Gastrocnemius medialis (tissue), 4 donors: ENCODE measurements at regions of chr17 and their contacts with region 1.

Region 1: GRCh38 chr17:65556014-65556909 is 5.2 kb downstream of the AXIN2 start:
- DNase-seq: peak; percentile 62 to 81
- ATAC-seq: peak; percentile 29 to 46
- H3K4me3 ChIP-seq: peak overlapping the region in 1 of 4 donors; percentile 32
- H3K27ac ChIP-seq: no peak overlapping the region
- H3K4me1 ChIP-seq: peaks cover 14 to 31% of the 10 kb centered on the region in 2 donors
- H3K27me3 ChIP-seq: no peaks in the 10 kb centered on the region
- CTCF ChIP-seq: peak; percentile 73 to 95 (median 90)
- POLR2A ChIP-seq: peak; percentile 41 to 76

Region 2: GRCh38 chr17:65055348-65056261 is 500.7 kb before region 1 on chr17:
- in situ Hi-C with region 1: no loop called
- intact Hi-C with region 1: loop called (anchors 10 kb)
- DNase-seq: peak; percentile 79 to 84
- ATAC-seq: peak; percentile 60 to 72
- H3K4me3 ChIP-seq: peak overlapping the region; percentile 72 to 96 (median 90)
- H3K27ac ChIP-seq: peak overlapping the region; percentile 98 to 100 (median 99)
- H3K4me1 ChIP-seq: peaks cover 35 to 38% of the 10 kb centered on the region in 2 donors
- H3K27me3 ChIP-seq: no peaks in the 10 kb centered on the region
- CTCF ChIP-seq: no peak
- POLR2A ChIP-seq: peak; percentile 88 to 89

Region 3: GRCh38 chr17:65389953-65390352 is 166.3 kb before region 1 on chr17:
- in situ Hi-C with region 1: no loop called
- intact Hi-C with region 1: loop called (anchors 2 kb)
- DNase-seq: no peak
- ATAC-seq: peak; percentile 21 to 58
- H3K4me3 ChIP-seq: no peak overlapping the region
- H3K27ac ChIP-seq: peak overlapping the region; percentile 79 to 85 (median 82)
- H3K4me1 ChIP-seq: peaks cover 15 to 31% of the 10 kb centered on the region in 2 donors
- H3K27me3 ChIP-seq: no peaks in the 10 kb centered on the region
- CTCF ChIP-seq: no peak
- POLR2A ChIP-seq: no peak

Region 4: DNA sequence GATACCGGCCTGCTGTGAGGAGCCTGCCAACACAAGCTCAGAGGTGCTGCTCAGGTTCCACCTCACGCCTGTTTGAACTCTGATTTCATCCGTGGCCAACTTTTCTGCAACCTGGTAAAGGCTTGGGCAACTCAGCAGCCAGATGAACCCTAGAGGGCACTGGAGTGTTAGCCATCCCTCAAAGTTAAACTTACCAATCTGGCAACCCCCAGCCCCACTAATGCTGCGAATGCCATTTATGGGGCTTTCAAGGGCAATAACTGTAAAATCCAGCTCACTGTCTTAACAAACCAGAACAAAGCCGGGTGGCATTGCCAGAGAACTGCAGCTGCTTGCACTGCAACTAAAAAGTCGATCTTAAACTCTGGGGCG is 100.3 kb before region 1 on chr17:
- in situ Hi-C with region 1: loop called (anchors 5 to 10 kb)
- intact Hi-C with region 1: loop called (anchors 1 kb)
- DNase-seq: peak; percentile 64 to 84
- ATAC-seq: peak; percentile 83 to 89
- H3K4me3 ChIP-seq: no peak overlapping the region
- H3K27ac ChIP-seq: peak overlapping the region; percentile 69 to 89 (median 75)
- H3K4me1 ChIP-seq: peaks cover 33 to 35% of the 10 kb centered on the region in 2 donors
- H3K27me3 ChIP-seq: no peaks in the 10 kb centered on the region
- CTCF ChIP-seq: peak in 4 of 5 experiments; percentile 47 to 65 (median 58)
- POLR2A ChIP-seq: peak in 1 of 2 donors; percentile 45